CD8-positive, alpha-beta T cell (primary cell): ENCODE measurements at regions of chr15 and their contacts with region 1.

Region 1: GRCh38 chr15:90886041-90886614 is 1.8 kb downstream of the FES start:
- DNase-seq: peak; percentile 59 to 88 (median 78)
- ATAC-seq: peak; percentile 57
- H3K4me3 ChIP-seq: no peak overlapping the region
- H3K4me3 Mint-ChIP-seq: no peak overlapping the region
- H3K27ac ChIP-seq: no peak overlapping the region
- H3K27ac Mint-ChIP-seq: no peak overlapping the region
- H3K4me1 ChIP-seq: peaks cover 10% of the 10 kb centered on the region
- H3K4me1 Mint-ChIP-seq: peaks cover 7% of the 10 kb centered on the region
- H3K27me3 ChIP-seq: peaks cover 0 to 3% of the 10 kb centered on the region in 2 experiments
- H3K27me3 Mint-ChIP-seq: peaks cover 8% of the 10 kb centered on the region
- CTCF ChIP-seq: peak; percentile 98

Region 2: GRCh38 chr15:90362936-90363212 is 523.3 kb before region 1 on chr15:
- CTCF ChIA-PET with region 1: interaction called, 5 read pairs
- POLR2A ChIA-PET with region 1: no interaction called
- intact Hi-C with region 1: loop called in 1 of 2 experiments (anchors 5 kb)
- DNase-seq: no peak
- ATAC-seq: no peak
- H3K4me3 ChIP-seq: no peak overlapping the region
- H3K4me3 Mint-ChIP-seq: no peak overlapping the region
- H3K27ac ChIP-seq: no peak overlapping the region
- H3K27ac Mint-ChIP-seq: no peak overlapping the region
- H3K4me1 ChIP-seq: peaks cover 12% of the 10 kb centered on the region
- H3K4me1 Mint-ChIP-seq: peaks cover 18% of the 10 kb centered on the region
- H3K27me3 ChIP-seq: no peaks in the 10 kb centered on the region
- H3K27me3 Mint-ChIP-seq: no peaks in the 10 kb centered on the region
- CTCF ChIP-seq: no peak

Region 3: GRCh38 chr15:90463381-90463780 is 422.7 kb before region 1 on chr15:
- CTCF ChIA-PET with region 1: no interaction called
- POLR2A ChIA-PET with region 1: no interaction called
- intact Hi-C with region 1: no loop called
- DNase-seq: no peak
- ATAC-seq: no peak
- H3K4me3 ChIP-seq: no peak overlapping the region
- H3K4me3 Mint-ChIP-seq: no peak overlapping the region
- H3K27ac ChIP-seq: no peak overlapping the region
- H3K27ac Mint-ChIP-seq: no peak overlapping the region
- H3K4me1 ChIP-seq: no peaks in the 10 kb centered on the region
- H3K4me1 Mint-ChIP-seq: peaks cover 14% of the 10 kb centered on the region
- H3K27me3 ChIP-seq: no peaks in the 10 kb centered on the region
- H3K27me3 Mint-ChIP-seq: no peaks in the 10 kb centered on the region
- CTCF ChIP-seq: no peak

Region 4: GRCh38 chr15:90642464-90643300 is 243.4 kb before region 1 on chr15:
- CTCF ChIA-PET with region 1: interaction called, 95 read pairs
- POLR2A ChIA-PET with region 1: interaction called, 4 read pairs
- intact Hi-C with region 1: no loop called
- DNase-seq: no peak
- ATAC-seq: no peak
- H3K4me3 ChIP-seq: no peak overlapping the region
- H3K4me3 Mint-ChIP-seq: no peak overlapping the region
- H3K27ac ChIP-seq: no peak overlapping the region
- H3K27ac Mint-ChIP-seq: no peak overlapping the region
- H3K4me1 ChIP-seq: peaks cover 1% of the 10 kb centered on the region
- H3K4me1 Mint-ChIP-seq: peaks cover 2% of the 10 kb centered on the region
- H3K27me3 ChIP-seq: no peaks in the 10 kb centered on the region
- H3K27me3 Mint-ChIP-seq: no peaks in the 10 kb centered on the region
- CTCF ChIP-seq: no peak

Region 5: GRCh38 chr15:90665288-90666134 is 220.6 kb before region 1 on chr15:
- CTCF ChIA-PET with region 1: interaction called, 10 read pairs
- POLR2A ChIA-PET with region 1: no interaction called
- intact Hi-C with region 1: no loop called
- DNase-seq: peak in 7 of 9 experiments; percentile 26 to 61 (median 40)
- ATAC-seq: peak; percentile 63
- H3K4me3 ChIP-seq: peak overlapping the region; percentile 55 to 63
- H3K4me3 Mint-ChIP-seq: peak overlapping the region; percentile 81
- H3K27ac ChIP-seq: peak overlapping the region; percentile 43 to 55
- H3K27ac Mint-ChIP-seq: peak overlapping the region; percentile 58
- H3K4me1 ChIP-seq: peaks cover 52% of the 10 kb centered on the region
- H3K4me1 Mint-ChIP-seq: peaks cover 51% of the 10 kb centered on the region
- H3K27me3 ChIP-seq: peaks cover 0 to 17% of the 10 kb centered on the region in 2 experiments
- H3K27me3 Mint-ChIP-seq: peaks cover 3% of the 10 kb centered on the region
- CTCF ChIP-seq: no peak

Region 6: GRCh38 chr15:90716976-90717821 is 168.9 kb before region 1 on chr15 and contains the start of gene BLM:
- CTCF ChIA-PET with region 1: interaction called, 13 read pairs
- POLR2A ChIA-PET with region 1: no interaction called
- intact Hi-C with region 1: loop called in 1 of 2 experiments (anchors 1 kb)
- DNase-seq: peak; percentile 89 to 98 (median 93)
- ATAC-seq: peak; percentile 99
- H3K4me3 ChIP-seq: peak within 1 kb of the TSS; percentile 82 to 95
- H3K4me3 Mint-ChIP-seq: peak within 1 kb of the TSS; percentile 95
- H3K27ac ChIP-seq: peak within 1 kb of the TSS; percentile 78 to 95
- H3K27ac Mint-ChIP-seq: peak within 1 kb of the TSS; percentile 91
- H3K4me1 ChIP-seq: peaks cover 12% of the 10 kb centered on the region
- H3K4me1 Mint-ChIP-seq: peaks cover 31% of the 10 kb centered on the region
- H3K27me3 ChIP-seq: no peaks in the 10 kb centered on the region
- H3K27me3 Mint-ChIP-seq: no peaks in the 10 kb centered on the region
- CTCF ChIP-seq: peak; percentile 21
- total RNA-seq, gene BLM: 2.5 to 2.6 TPM

Region 7: DNA sequence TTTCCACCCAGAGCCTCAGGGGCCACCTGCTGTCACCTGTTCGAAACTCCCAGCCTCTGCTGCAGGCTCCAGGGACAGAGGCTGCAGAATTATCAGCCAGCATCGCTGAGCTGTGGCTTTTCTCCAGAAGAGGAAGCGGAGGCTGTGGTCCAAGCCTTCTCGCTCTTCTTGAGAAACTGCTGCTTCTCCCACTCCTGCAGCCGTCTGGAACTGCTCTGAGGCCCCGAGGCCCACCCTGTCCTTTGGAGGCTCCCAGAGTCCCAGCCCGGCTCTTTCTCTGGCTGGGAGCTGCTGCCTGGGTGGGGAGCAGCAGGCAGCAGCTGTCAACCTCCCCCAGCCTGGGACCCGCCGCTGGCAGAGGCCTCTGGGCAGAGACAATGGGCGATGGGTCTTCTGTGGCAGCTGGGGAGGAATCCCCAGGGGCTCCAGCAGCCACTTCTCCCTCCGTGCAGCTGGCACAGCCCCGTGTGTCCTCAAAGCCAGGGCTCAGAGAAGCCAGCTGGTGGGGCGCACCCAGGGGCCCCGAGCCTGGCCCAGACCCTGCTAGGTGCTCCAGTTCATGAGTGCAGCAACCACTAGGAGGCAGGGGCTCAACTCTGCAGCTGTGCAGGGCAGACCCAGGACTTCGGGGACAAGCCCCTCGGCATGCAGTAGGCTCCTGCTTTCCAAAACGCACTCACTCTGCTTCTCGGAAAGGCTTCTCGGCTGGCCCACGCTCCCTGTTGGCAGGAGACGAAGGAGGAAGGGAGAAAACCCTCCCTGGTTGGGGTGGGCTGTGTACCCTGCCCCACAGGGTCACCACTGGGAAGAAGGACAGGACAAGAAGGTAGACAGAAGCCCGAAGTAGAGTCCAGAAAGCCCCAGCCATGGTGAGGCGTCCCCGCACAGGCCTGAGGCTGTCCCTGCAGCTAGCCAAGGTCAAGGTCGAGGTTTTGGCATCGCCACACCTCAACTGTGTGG is 67.6 kb before region 1 on chr15:
- CTCF ChIA-PET with region 1: interaction called, 5 read pairs
- POLR2A ChIA-PET with region 1: no interaction called
- intact Hi-C with region 1: loop called (anchors 1 to 2 kb)
- DNase-seq: peak in 5 of 9 experiments; percentile 27 to 60 (median 41)
- ATAC-seq: peak; percentile 64
- H3K4me3 ChIP-seq: no peak overlapping the region
- H3K4me3 Mint-ChIP-seq: peak overlapping the region; percentile 37
- H3K27ac ChIP-seq: no peak overlapping the region
- H3K27ac Mint-ChIP-seq: no peak overlapping the region
- H3K4me1 ChIP-seq: peaks cover 21% of the 10 kb centered on the region
- H3K4me1 Mint-ChIP-seq: peaks cover 36% of the 10 kb centered on the region
- H3K27me3 ChIP-seq: no peaks in the 10 kb centered on the region
- H3K27me3 Mint-ChIP-seq: no peaks in the 10 kb centered on the region
- CTCF ChIP-seq: peak; percentile 41

Region 8: DNA sequence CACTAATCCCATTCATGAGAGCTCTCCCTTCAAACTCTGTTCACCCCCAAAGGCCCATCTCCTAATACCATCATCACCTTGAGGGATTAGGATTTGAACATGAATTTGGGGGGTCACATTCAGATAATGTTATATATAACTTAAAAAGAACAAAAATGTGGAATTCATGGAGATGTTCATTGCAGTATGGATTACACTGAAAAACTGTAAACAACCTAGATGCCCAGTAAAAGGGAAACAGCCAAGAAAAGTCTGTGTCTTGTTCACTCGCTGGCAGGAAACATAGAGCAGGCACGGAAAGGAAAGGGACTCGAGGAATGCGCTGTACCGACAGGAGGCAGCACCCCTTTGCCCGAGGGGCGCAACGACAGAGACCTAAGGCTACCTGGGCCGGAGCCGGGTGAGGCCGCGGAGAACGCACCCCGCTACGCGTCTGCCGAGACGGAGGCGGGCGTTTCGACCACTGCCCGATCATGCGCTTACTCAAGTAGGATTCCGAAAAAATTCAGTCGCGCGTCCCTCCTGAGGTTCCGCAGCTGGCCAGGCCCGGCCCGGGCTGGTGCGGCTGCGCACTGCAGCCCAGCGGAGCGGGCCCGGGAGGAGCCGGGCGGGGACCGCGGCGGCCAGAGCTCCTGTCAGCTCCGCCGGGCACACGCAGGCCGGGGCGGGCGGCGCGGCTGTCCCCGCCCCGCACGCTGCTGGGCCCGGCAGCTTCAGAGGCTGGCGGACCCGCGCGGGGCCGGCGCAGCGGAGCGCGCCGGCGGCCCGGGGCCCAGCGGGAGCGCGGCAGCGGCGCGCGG is 16.1 kb after region 1 on chr15:
- CTCF ChIA-PET with region 1: interaction called, 48 read pairs
- POLR2A ChIA-PET with region 1: interaction called, 5 read pairs
- intact Hi-C with region 1: no loop called
- DNase-seq: peak; percentile 42 to 88 (median 70)
- ATAC-seq: peak; percentile 69
- H3K4me3 ChIP-seq: peak overlapping the region; percentile 65 to 89
- H3K4me3 Mint-ChIP-seq: peak overlapping the region; percentile 92
- H3K27ac ChIP-seq: peak overlapping the region; percentile 65 to 73
- H3K27ac Mint-ChIP-seq: peak overlapping the region; percentile 93
- H3K4me1 ChIP-seq: peaks cover 15% of the 10 kb centered on the region
- H3K4me1 Mint-ChIP-seq: peaks cover 28% of the 10 kb centered on the region
- H3K27me3 ChIP-seq: no peaks in the 10 kb centered on the region
- H3K27me3 Mint-ChIP-seq: no peaks in the 10 kb centered on the region
- CTCF ChIP-seq: peak; percentile 84

Region 9: DNA sequence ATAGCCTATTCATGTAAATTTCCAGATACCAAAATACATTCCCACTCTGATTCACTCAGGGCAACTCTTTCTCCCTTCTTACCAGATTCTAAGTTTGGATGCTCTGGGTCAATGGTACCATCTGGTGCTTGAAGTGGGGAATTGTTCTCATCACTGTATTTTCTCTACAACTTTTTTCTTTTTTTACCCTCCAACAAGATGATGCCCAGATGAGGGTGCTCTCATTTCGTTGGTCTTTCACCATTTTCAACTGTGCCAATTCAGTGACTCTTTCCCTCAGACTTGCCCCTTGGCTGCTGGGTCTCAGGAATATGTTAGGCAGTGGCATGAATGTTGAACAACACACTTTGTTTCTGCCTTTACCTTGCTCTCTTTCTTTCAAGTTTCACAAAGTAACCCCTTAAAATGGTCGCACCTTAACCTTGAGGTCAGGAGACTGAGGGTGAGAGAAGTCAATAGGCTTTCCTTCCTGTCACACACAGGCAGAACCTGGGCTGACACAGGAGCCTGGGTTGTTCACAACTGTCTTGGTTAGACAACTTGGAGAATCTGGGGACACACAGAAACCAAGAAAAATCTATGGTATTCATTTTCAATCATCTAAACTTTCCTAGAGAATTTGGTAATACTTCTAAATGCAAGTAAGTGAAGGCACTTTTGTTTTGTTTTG is 636.7 kb after region 1 on chr15:
- CTCF ChIA-PET with region 1: no interaction called
- POLR2A ChIA-PET with region 1: no interaction called
- intact Hi-C with region 1: no loop called
- DNase-seq: peak in 2 of 9 experiments; percentile 56 to 66
- ATAC-seq: no peak
- H3K4me3 ChIP-seq: no peak overlapping the region
- H3K4me3 Mint-ChIP-seq: no peak overlapping the region
- H3K27ac ChIP-seq: no peak overlapping the region
- H3K27ac Mint-ChIP-seq: peak overlapping the region; percentile 33
- H3K4me1 ChIP-seq: peaks cover 14% of the 10 kb centered on the region
- H3K4me1 Mint-ChIP-seq: peaks cover 11% of the 10 kb centered on the region
- H3K27me3 ChIP-seq: no peaks in the 10 kb centered on the region
- H3K27me3 Mint-ChIP-seq: peaks cover 10% of the 10 kb centered on the region
- CTCF ChIP-seq: peak; percentile 33

Region 10: GRCh38 chr15:92578096-92578835 is 1692.1 kb after region 1 on chr15:
- CTCF ChIA-PET with region 1: no interaction called
- POLR2A ChIA-PET with region 1: no interaction called
- intact Hi-C with region 1: no loop called
- DNase-seq: peak in 1 of 9 experiments; percentile 32
- ATAC-seq: no peak
- H3K4me3 ChIP-seq: no peak overlapping the region
- H3K4me3 Mint-ChIP-seq: no peak overlapping the region
- H3K27ac ChIP-seq: no peak overlapping the region
- H3K27ac Mint-ChIP-seq: no peak overlapping the region
- H3K4me1 ChIP-seq: no peaks in the 10 kb centered on the region
- H3K4me1 Mint-ChIP-seq: no peaks in the 10 kb centered on the region
- H3K27me3 ChIP-seq: no peaks in the 10 kb centered on the region
- H3K27me3 Mint-ChIP-seq: peaks cover 3% of the 10 kb centered on the region
- CTCF ChIP-seq: no peak